HEK293T (cell line): ENCODE measurements at regions of chr21 and their contacts with region 1.

Region 1: DNA sequence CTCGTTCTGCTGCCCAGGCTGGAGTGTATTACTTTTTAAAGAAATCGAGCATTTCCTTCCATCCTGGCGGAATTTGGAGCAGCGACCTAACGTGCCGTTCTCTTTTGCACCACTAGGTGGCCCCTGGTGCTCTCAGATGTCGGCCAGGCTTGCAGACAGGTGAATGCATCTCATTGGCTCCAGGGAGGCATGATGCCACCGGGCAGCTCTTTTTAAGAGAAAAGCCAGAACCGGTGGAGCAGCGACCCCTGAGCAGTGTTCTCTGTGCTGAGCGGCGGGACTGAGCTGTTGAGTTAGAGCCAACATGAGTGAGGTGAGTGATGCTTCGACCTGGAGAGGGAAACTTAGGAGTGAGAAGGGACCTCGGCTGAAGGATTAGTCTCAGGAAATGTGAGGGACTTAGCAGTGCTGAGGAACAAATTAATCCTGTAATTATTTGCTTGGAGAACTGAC is at the start of gene PCP4:
- DNase-seq: peak; percentile 65

Region 2: DNA sequence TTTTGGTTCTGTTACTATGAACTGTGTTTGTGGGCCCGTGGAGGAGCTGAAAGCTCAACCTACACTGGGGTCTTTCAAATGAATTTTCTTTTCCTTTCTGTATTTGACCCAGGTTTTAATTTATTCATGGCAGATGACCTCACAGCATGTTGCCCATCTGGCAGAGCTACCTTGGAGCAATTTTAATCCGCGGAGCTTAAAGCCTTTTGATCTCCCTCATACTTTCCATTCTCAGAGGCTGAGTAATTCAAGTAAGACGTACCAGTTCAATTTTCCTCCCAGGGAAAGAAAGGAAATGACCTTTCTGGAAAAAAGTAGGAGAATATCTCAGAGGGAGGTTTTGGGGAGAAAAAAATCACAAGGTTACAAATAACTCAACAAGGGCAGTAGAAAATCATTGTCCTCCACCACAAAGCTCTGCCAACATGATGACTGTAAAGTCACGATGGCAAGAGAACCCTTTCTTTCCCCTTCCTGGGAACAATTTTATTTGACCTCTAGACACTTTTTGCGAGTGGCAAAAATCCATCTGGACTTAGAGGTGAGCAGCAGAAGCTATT is 21.6 kb before region 1 on chr21:
- CTCF ChIA-PET with region 1: no interaction called
- POLR2A ChIA-PET with region 1: no interaction called
- DNase-seq: no peak

Region 3: GRCh38 chr21:39885119-39885848 is 18.1 kb after region 1 on chr21:
- CTCF ChIA-PET with region 1: no interaction called
- POLR2A ChIA-PET with region 1: no interaction called
- DNase-seq: no peak

Region 4: DNA sequence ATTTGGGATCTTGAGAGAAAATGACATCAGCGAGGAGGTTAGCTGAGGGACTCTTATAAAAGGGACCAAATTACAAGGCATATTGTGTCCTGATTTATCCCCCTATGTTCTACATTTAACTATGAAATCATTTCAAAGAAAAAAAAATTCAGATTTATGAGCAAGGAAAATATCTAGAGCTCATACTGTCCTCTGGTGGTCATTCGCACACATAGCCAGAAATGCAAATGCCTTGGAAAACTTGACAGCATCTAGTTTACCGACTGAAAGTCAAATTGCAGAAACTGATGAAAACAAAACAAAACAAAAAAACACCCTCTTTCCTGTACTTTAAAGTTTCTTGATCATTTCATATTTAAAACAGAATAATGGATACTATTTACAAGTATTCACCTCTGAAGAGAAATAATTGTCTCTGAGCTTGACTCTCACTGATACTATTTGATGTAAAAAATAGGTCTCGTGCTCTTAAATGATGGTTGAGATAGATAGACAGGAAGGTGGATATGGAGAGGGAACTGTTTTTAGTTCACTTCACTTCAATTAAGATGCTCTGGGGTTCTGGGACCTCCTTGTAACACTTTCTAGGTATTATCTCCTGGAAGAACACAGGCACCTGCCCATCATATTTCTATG is 253.8 kb after region 1 on chr21:
- CTCF ChIA-PET with region 1: interaction called, 11 read pairs
- POLR2A ChIA-PET with region 1: no interaction called
- DNase-seq: no peak